ENCODE measurements at regions of chr2 and their contacts with region 1.

Region 1: GRCh38 chr2:132547074-132547687 is 122.8 kb downstream of the LYPD1 start:
- DNase-seq: no peak
- H3K4me3 ChIP-seq: no peak overlapping the region
- H3K27ac ChIP-seq: no peak overlapping the region
- H3K4me1 ChIP-seq: peaks cover 0 to 9% (median 3%) of the 10 kb centered on the region in 4 donors
- H3K27me3 ChIP-seq: no peaks in the 10 kb centered on the region
- CTCF ChIP-seq: peak; percentile 55 to 70 (median 66)
- EP300 ChIP-seq: no peak
- POLR2A ChIP-seq: no peak

Region 2: GRCh38 chr2:132609101-132609890 is 62.1 kb after region 1 on chr2:
- intact Hi-C with region 1: no loop called
- DNase-seq: no peak
- H3K4me3 ChIP-seq: no peak overlapping the region
- H3K27ac ChIP-seq: no peak overlapping the region
- H3K4me1 ChIP-seq: no peaks in the 10 kb centered on the region
- H3K27me3 ChIP-seq: no peaks in the 10 kb centered on the region
- CTCF ChIP-seq: no peak
- EP300 ChIP-seq: no peak
- POLR2A ChIP-seq: no peak

Region 3: GRCh38 chr2:133171393-133172004 is 624.3 kb after region 1 on chr2:
- intact Hi-C with region 1: loop called (anchors 2 kb)
- DNase-seq: no peak
- H3K4me3 ChIP-seq: no peak overlapping the region
- H3K27ac ChIP-seq: no peak overlapping the region
- H3K4me1 ChIP-seq: no peaks in the 10 kb centered on the region
- H3K27me3 ChIP-seq: peaks cover 0 to 7% (median 0%) of the 10 kb centered on the region in 4 donors
- CTCF ChIP-seq: peak; percentile 57 to 59 (median 58)
- EP300 ChIP-seq: no peak
- POLR2A ChIP-seq: no peak